ENCODE measurements at regions of chr10 and their contacts with region 1.

Region 1: DNA sequence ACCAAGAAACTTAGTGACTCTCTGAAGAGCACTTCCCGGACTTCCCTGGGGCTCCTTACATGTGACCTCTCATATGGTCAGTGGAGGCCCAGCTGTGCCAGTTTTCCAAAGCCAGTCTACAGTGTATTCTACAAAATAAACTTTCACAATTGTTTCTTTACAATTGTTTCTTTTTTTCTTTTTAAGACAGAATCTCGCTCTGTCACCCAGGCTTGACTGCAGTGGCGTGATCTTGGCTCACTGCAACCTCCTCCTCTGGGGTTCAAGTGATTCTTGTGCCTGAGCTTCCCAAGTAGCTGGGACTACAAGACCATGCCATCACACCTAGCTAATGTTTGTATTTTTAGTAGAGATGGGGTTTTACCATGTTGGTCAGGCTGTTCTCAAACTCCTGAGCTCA is 25.9 kb downstream of the CYP17A1 start:
- DNase-seq: no peak
- ATAC-seq: no peak
- H3K4me3 ChIP-seq: no peak overlapping the region
- H3K27ac ChIP-seq: no peak overlapping the region
- H3K4me1 ChIP-seq: peaks cover 31% of the 10 kb centered on the region; the same call in 1 of the 2 replicates
- H3K27me3 ChIP-seq: no peaks in the 10 kb centered on the region
- CTCF ChIP-seq: no peak

Region 2: GRCh38 chr10:102696736-102697135 is 114.6 kb before region 1 on chr10:
- CTCF ChIA-PET with region 1: no interaction called
- POLR2A ChIA-PET with region 1: interaction called, 12 read pairs
- in situ Hi-C with region 1: no loop called
- intact Hi-C with region 1: no loop called
- DNase-seq: no peak
- ATAC-seq: no peak
- H3K4me3 ChIP-seq: no peak overlapping the region
- H3K27ac ChIP-seq: no peak overlapping the region
- H3K4me1 ChIP-seq: no peaks in the 10 kb centered on the region
- H3K27me3 ChIP-seq: no peaks in the 10 kb centered on the region
- CTCF ChIP-seq: no peak